Caco-2 (cell line): ENCODE measurements at regions of chr7 and their contacts with region 1.

Region 1: DNA sequence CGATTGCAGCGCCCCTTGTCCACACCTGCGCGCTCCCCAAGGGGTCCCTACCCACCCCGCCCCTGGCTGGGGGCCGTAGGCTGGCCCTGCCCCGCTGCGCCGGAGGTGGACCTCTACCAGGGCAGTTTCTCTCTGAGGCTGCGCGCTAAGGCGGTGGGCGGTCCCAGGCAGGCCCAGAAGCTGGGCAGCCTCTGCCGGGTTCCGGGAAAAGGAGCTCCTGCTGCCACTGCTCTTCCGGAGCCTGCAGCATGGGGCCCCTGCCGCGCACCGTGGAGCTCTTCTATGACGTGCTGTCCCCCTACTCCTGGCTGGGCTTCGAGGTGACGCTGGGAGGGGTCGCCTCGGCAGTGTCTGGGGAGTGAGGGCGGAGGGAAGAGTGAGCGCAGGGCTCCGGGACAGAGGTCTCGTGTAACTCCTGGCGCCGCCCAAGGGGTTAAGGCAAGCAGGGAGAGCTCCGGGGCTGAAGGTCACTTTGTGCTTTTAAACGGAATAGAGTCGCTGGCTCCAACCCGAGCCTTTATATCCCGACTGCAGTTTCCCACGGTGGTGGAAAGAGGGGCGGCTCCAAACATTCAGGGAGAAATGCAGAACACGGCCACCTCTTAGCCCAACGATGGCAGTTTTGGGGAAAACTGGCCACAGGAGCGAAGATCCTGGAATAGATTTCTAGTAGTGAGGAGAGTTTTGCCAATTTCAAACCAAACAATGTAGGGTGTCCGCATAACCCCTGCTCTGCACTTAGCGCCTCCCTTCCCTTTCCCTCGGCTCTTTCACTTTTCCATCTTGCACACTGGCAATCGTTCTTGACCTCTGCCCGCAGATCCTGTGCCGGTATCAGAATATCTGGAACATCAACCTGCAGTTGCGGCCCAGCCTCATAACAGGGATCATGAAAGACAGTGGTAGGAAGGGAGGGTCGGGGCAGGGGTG is at the start of gene GSTK1:
- DNase-seq: peak; percentile 84 to 89
- H3K4me3 ChIP-seq: peak within 1 kb of the TSS; percentile 66
- H3K4me3 Mint-ChIP-seq: peak within 1 kb of the TSS; percentile 94
- H3K27ac Mint-ChIP-seq: peak within 1 kb of the TSS; percentile 97
- H3K4me1 ChIP-seq: peaks cover 28% of the 10 kb centered on the region
- H3K4me1 Mint-ChIP-seq: peaks cover 32% of the 10 kb centered on the region
- H3K27me3 ChIP-seq: no peaks in the 10 kb centered on the region
- H3K27me3 Mint-ChIP-seq: no peaks in the 10 kb centered on the region
- CTCF ChIP-seq: no peak
- total RNA-seq, gene GSTK1: 127 and 134 TPM in 2 replicates

Region 2: DNA sequence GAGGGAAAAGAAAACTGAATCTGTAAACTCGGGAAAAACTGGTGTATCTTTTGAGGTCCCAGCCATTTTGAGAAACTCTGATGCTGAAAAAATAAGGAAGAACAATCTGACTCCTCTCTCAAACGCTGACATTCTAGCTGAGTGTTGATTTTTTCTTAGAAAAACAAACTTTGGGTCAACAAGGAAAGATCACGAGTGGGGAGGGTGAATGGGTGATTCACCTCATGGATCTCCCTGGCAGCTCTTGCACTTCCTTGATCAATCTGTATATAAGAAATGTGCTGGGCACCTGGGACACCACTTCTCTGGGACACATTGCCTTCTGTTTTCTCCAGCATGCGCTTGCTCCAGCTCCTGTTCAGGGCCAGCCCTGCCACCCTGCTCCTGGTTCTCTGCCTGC is 131.8 kb before region 1 on chr7 and contains the start of gene PIP:
- CTCF ChIA-PET with region 1: no interaction called
- POLR2A ChIA-PET with region 1: no interaction called
- intact Hi-C with region 1: no loop called
- DNase-seq: no peak
- H3K4me3 ChIP-seq: no peak within 1 kb of the TSS
- H3K4me3 Mint-ChIP-seq: no peak within 1 kb of the TSS
- H3K27ac Mint-ChIP-seq: no peak within 1 kb of the TSS
- H3K4me1 ChIP-seq: no peaks in the 10 kb centered on the region
- H3K4me1 Mint-ChIP-seq: no peaks in the 10 kb centered on the region
- H3K27me3 ChIP-seq: no peaks in the 10 kb centered on the region
- H3K27me3 Mint-ChIP-seq: peaks cover 18% of the 10 kb centered on the region
- CTCF ChIP-seq: no peak
- total RNA-seq, gene PIP: not detected in 2 replicates

Region 3: GRCh38 chr7:143287935-143288826 is 24.6 kb after region 1 on chr7 and contains the start of gene CASP2:
- CTCF ChIA-PET with region 1: interaction called, 8 read pairs
- POLR2A ChIA-PET with region 1: interaction called, 23 read pairs
- intact Hi-C with region 1: loop called (anchors 1 kb)
- DNase-seq: peak; percentile 99
- H3K4me3 ChIP-seq: peak within 1 kb of the TSS; percentile 73
- H3K4me3 Mint-ChIP-seq: peak within 1 kb of the TSS; percentile 81
- H3K27ac Mint-ChIP-seq: peak within 1 kb of the TSS; percentile 89
- H3K4me1 ChIP-seq: peaks cover 37% of the 10 kb centered on the region
- H3K4me1 Mint-ChIP-seq: peaks cover 47% of the 10 kb centered on the region
- H3K27me3 ChIP-seq: no peaks in the 10 kb centered on the region
- H3K27me3 Mint-ChIP-seq: no peaks in the 10 kb centered on the region
- CTCF ChIP-seq: peak; percentile 53 to 55
- total RNA-seq, gene CASP2: 51.7 and 62.0 TPM in 2 replicates

Region 4: DNA sequence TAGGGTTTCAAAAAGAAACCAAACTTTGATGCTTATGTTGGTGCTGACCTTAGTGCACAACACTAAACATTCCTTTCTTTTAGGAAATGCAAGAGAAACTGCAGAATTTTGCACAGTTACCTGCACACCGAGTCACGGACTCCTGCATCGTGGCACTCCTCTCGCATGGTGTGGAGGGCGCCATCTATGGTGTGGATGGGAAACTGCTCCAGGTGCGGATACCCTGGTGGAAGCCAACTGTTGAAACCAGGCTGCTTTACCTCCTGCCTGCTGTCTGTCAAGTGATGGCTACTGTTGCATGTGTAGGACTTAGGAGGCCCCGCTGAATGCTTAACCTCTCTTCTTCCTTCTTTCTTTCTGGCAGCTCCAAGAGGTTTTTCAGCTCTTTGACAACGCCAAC is 36.3 kb after region 1 on chr7:
- CTCF ChIA-PET with region 1: interaction called, 3 read pairs
- POLR2A ChIA-PET with region 1: no interaction called
- intact Hi-C with region 1: loop called (anchors 1 kb)
- DNase-seq: peak; percentile 71 to 77
- H3K4me3 ChIP-seq: no peak overlapping the region
- H3K4me3 Mint-ChIP-seq: no peak overlapping the region
- H3K27ac Mint-ChIP-seq: no peak overlapping the region
- H3K4me1 ChIP-seq: peaks cover 18% of the 10 kb centered on the region
- H3K4me1 Mint-ChIP-seq: peaks cover 26% of the 10 kb centered on the region
- H3K27me3 ChIP-seq: no peaks in the 10 kb centered on the region
- H3K27me3 Mint-ChIP-seq: no peaks in the 10 kb centered on the region
- CTCF ChIP-seq: peak; percentile 68 to 71

Region 5: GRCh38 chr7:143367972-143368371 is 104.4 kb after region 1 on chr7:
- CTCF ChIA-PET with region 1: interaction called, 9 read pairs
- POLR2A ChIA-PET with region 1: interaction called, 12 read pairs
- intact Hi-C with region 1: no loop called
- DNase-seq: peak in 1 of 2 experiments; percentile 32
- H3K4me3 ChIP-seq: no peak overlapping the region
- H3K4me3 Mint-ChIP-seq: no peak overlapping the region
- H3K27ac Mint-ChIP-seq: peak overlapping the region; percentile 96
- H3K4me1 ChIP-seq: peaks cover 49% of the 10 kb centered on the region
- H3K4me1 Mint-ChIP-seq: peaks cover 54% of the 10 kb centered on the region
- H3K27me3 ChIP-seq: no peaks in the 10 kb centered on the region
- H3K27me3 Mint-ChIP-seq: no peaks in the 10 kb centered on the region
- CTCF ChIP-seq: no peak